Heart left ventricle (tissue), 16 donors: ENCODE measurements at regions of chr11 and their contacts with region 1.

Region 1: GRCh38 chr11:11545285-11546275 is 76.2 kb downstream of the GALNT18 start:
- DNase-seq: no peak
- ATAC-seq: peak in 1 of 4 donors; percentile 16
- H3K4me3 ChIP-seq: no peak overlapping the region
- H3K27ac ChIP-seq: peak overlapping the region in 8 of 12 donors; percentile 73 to 87 (median 81)
- H3K4me1 ChIP-seq: peaks cover 0 to 78% (median 41%) of the 10 kb centered on the region in 12 donors
- H3K27me3 ChIP-seq: no peaks in the 10 kb centered on the region
- CTCF ChIP-seq: no peak
- POLR2A ChIP-seq: no peak

Region 2: DNA sequence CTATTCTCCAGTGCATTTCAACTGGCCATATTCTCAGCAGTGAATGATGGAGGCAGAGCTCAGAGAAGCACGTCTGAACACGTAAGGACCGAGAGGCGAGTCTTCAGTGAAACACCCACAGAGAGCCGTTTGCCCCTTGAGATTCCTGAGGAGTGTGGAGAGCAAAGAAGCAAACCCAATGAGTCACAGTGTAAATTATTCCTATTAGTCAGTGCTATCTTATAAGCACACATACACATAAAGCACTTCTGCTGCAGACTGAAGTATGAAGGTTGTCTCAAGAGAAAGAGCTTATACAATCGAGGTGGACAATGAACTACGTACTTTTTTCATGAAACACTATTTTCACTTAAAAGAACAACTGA is 38.8 kb after region 1 on chr11:
- intact Hi-C with region 1: loop called in 1 of 10 experiments (anchors 5 kb)
- DNase-seq: no peak
- ATAC-seq: peak in 1 of 4 donors; percentile 22
- H3K4me3 ChIP-seq: no peak overlapping the region
- H3K27ac ChIP-seq: peak overlapping the region in 2 of 12 donors; percentile 44 to 56
- H3K4me1 ChIP-seq: peaks cover 12 to 88% (median 52%) of the 10 kb centered on the region in 12 donors
- H3K27me3 ChIP-seq: no peaks in the 10 kb centered on the region
- CTCF ChIP-seq: no peak
- POLR2A ChIP-seq: no peak